Psoas muscle (tissue), 8 donors: ENCODE measurements at regions of chr13 and their contacts with region 1.

Region 1: GRCh38 chr13:112626124-112626523 is 38.2 kb upstream of the TUBGCP3 start:
- DNase-seq: no peak
- ATAC-seq: no peak
- H3K4me3 ChIP-seq: no peak overlapping the region
- H3K27ac ChIP-seq: no peak overlapping the region
- H3K4me1 ChIP-seq: no peaks in the 10 kb centered on the region
- H3K27me3 ChIP-seq: peaks cover 0 to 28% (median 7%) of the 10 kb centered on the region in 3 donors
- CTCF ChIP-seq: no peak

Region 2: GRCh38 chr13:112661291-112661690 is 35.2 kb after region 1 on chr13:
- intact Hi-C with region 1: loop called in 1 of 2 experiments (anchors 2 kb)
- DNase-seq: no peak
- ATAC-seq: no peak
- H3K4me3 ChIP-seq: no peak overlapping the region
- H3K27ac ChIP-seq: no peak overlapping the region
- H3K4me1 ChIP-seq: no peaks in the 10 kb centered on the region
- H3K27me3 ChIP-seq: peaks cover 0 to 4% (median 0%) of the 10 kb centered on the region in 3 donors
- CTCF ChIP-seq: no peak

Region 3: GRCh38 chr13:113083402-113084061 is 457.4 kb after region 1 on chr13:
- intact Hi-C with region 1: no loop called
- DNase-seq: peak; percentile 65 to 82
- ATAC-seq: peak; percentile 78 to 94 (median 90)
- H3K4me3 ChIP-seq: no peak overlapping the region
- H3K27ac ChIP-seq: no peak overlapping the region
- H3K4me1 ChIP-seq: no peaks in the 10 kb centered on the region
- H3K27me3 ChIP-seq: peaks cover 0 to 18% (median 4%) of the 10 kb centered on the region in 3 donors
- CTCF ChIP-seq: no peak